Heart right ventricle (tissue), 16 donors: ENCODE measurements at regions of chr15 and their contacts with region 1.

Region 1: DNA sequence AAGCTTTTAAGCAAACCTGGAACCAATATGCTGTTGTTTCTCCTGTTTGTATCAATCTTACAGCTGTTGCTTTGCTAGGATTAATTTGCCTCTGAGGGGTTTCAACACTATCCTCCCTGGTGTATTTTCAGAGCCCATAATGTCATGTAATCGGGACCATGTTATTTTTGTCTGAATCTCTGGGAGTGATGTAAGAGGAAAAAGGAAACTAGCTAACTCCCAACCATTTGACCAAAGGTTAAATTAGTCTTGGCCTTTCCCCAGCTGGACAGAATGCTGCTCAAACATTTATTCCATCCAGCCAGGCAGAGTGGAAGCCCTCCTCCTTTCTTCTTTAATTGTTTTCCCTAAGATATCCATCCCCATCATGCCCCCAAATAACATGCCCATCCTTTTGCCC is 142.2 kb downstream of the ALDH1A2 start:
- DNase-seq: peak in 1 of 2 donors; percentile 77
- ATAC-seq: peak; percentile 78 to 92 (median 86)
- H3K4me3 ChIP-seq: peak overlapping the region in 2 of 10 donors; percentile 10 to 11
- H3K27ac ChIP-seq: peak overlapping the region; percentile 27 to 87 (median 76)
- H3K4me1 ChIP-seq: peaks cover 8 to 57% (median 42%) of the 10 kb centered on the region in 9 donors
- H3K27me3 ChIP-seq: no peaks in the 10 kb centered on the region
- CTCF ChIP-seq: no peak

Region 2: GRCh38 chr15:57364282-57365007 is 558.9 kb before region 1 on chr15:
- intact Hi-C with region 1: no loop called
- DNase-seq: no peak
- ATAC-seq: peak in 4 of 8 donors; percentile 37 to 53 (median 47)
- H3K4me3 ChIP-seq: no peak overlapping the region
- H3K27ac ChIP-seq: no peak overlapping the region
- H3K4me1 ChIP-seq: peaks cover 0 to 5% (median 0%) of the 10 kb centered on the region in 9 donors
- H3K27me3 ChIP-seq: no peaks in the 10 kb centered on the region
- CTCF ChIP-seq: peak in 5 of 9 donors; percentile 6 to 28 (median 19)

Region 3: GRCh38 chr15:57769266-57769665 is 154.0 kb before region 1 on chr15:
- intact Hi-C with region 1: no loop called
- DNase-seq: peak; percentile 76 to 79
- ATAC-seq: peak; percentile 87 to 99 (median 96)
- H3K4me3 ChIP-seq: no peak overlapping the region
- H3K27ac ChIP-seq: peak overlapping the region in 8 of 10 donors; percentile 17 to 65 (median 40)
- H3K4me1 ChIP-seq: peaks cover 0 to 12% (median 0%) of the 10 kb centered on the region in 9 donors
- H3K27me3 ChIP-seq: no peaks in the 10 kb centered on the region
- CTCF ChIP-seq: no peak

Region 4: DNA sequence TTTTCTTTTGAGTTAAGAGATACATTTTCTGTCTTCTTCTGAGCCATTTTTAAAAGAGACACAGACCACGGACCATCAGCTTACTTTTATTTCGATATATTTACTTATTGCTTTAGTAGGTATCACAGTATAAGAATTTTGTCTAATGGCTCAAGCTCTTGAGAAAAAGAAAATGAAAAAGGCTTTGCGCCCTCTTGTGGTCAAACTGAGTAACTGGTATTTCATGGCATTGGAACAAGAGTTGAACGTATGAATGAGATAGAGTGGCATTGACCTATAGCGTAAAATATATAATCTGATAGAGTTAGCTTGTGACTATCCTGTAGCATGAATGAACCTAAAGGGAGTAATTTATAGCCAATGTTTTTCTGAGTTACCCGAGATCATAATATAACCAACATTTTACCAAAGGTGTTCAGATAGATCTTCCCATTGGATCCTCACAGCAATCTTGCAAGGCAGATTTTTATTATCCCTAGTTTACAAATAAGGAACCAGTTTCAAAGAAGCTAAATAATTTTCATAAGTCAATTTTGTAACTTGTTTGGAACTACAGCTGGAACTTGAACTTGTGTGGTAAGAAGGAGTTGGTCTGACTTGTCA is 62.2 kb before region 1 on chr15:
- intact Hi-C with region 1: no loop called
- DNase-seq: peak in 1 of 2 donors; percentile 36
- ATAC-seq: peak in 6 of 8 donors; percentile 31 to 57 (median 48)
- H3K4me3 ChIP-seq: no peak overlapping the region
- H3K27ac ChIP-seq: no peak overlapping the region
- H3K4me1 ChIP-seq: peaks cover 0 to 9% (median 6%) of the 10 kb centered on the region in 9 donors
- H3K27me3 ChIP-seq: no peaks in the 10 kb centered on the region
- CTCF ChIP-seq: peak; percentile 76 to 91 (median 85)

Region 5: GRCh38 chr15:57950381-57950946 is 27.2 kb after region 1 on chr15:
- intact Hi-C with region 1: loop called in 1 of 10 experiments (anchors 1 kb)
- DNase-seq: no peak
- ATAC-seq: no peak
- H3K4me3 ChIP-seq: no peak overlapping the region
- H3K27ac ChIP-seq: no peak overlapping the region
- H3K4me1 ChIP-seq: peaks cover 0 to 18% (median 3%) of the 10 kb centered on the region in 9 donors
- H3K27me3 ChIP-seq: peaks cover 0 to 3% (median 0%) of the 10 kb centered on the region in 7 donors
- CTCF ChIP-seq: no peak

Region 6: GRCh38 chr15:58043192-58043903 is 120.0 kb after region 1 on chr15:
- intact Hi-C with region 1: loop called in 1 of 10 experiments (anchors 5 kb)
- DNase-seq: peak in 1 of 2 donors; percentile 20
- ATAC-seq: peak in 3 of 8 donors; percentile 31 to 55 (median 31)
- H3K4me3 ChIP-seq: no peak overlapping the region
- H3K27ac ChIP-seq: no peak overlapping the region
- H3K4me1 ChIP-seq: peaks cover 0 to 8% (median 5%) of the 10 kb centered on the region in 9 donors
- H3K27me3 ChIP-seq: no peaks in the 10 kb centered on the region
- CTCF ChIP-seq: peak; percentile 25 to 76 (median 62)